ENCODE measurements at regions of chr17 and their contacts with region 1.

Region 1: DNA sequence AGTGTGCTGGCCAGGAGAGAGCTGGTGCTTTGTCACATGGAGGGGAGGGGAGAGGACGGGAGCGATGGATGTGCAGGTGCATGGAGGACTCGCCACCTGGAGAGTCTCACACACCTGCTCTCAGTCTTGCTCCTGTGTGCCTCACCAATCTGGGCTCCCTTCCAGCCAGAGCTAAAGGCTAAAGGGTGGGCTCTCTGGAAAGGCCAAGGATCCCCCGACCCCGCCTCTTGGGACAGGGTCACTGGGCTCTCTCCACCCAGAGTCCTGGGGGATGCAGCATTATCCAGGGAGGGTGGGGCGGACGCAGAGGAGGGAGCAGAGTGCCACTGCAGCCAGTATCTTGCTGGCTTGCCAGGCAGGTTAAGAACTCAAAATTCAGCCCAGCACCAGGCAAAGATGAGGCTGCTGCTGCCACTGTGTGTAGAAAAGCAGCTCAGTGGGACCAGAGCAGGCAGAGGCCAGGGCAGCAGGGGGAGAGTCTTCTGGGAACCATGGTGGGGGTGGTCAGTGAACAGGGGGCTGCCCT is 5.4 kb upstream of the STAT5B start:
- DNase-seq: peak; percentile 58 to 89 (median 88)
- ATAC-seq: peak; percentile 62
- H3K4me3 ChIP-seq: no peak overlapping the region
- H3K27ac ChIP-seq: peak overlapping the region; percentile 23 to 58 (median 49)
- H3K4me1 ChIP-seq: peaks cover 16% of the 10 kb centered on the region
- H3K27me3 ChIP-seq: no peaks in the 10 kb centered on the region
- CTCF ChIP-seq: no peak
- POLR2A ChIP-seq: peak in 1 of 3 donors; percentile 46

Region 2: DNA sequence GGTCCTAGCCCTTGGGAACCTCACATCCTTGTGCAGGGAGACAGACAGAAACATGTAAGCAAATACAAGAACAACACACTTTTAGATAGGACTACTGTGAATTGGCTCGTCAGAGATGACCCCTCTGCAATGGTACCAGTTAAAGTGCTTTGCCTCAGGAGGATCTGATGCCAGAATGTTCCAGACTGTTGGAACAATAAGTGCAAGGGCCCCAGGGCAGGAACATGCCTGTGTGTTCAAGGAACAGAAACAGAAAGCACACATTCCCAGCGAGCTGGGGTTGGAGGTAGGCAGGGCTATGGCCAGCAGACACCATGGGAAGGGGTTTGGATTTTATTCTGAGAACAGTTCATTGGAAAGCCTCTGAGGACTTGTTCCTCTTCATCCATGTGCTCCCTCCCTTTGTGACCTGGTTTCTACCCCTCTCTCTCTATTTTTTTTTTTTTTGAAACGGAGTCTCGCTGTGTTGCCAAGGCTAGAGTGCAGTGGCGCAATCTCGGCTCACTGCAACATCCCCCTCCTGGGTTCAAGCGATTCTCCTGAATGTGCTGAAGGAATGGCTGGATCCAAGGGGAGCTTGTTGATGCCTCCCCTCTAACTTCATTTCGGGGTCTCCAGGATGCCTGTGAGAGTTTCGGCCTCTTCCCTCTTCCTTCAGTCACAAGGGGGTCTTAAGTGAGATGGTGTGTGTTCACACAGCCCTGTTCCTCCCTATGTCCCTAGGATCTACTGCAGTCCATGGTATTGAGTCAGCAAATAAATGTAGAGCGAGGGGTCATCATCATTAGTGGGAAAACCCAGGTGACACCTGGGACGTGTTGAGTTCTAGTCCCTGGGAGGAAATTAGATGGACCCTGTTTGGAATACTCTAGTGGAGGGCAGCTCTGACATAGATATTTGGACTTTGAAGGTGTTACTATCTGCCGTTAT is 13.1 kb after region 1 on chr17:
- intact Hi-C with region 1: loop called (anchors 2 kb)
- DNase-seq: no peak
- ATAC-seq: no peak
- H3K4me3 ChIP-seq: no peak overlapping the region
- H3K27ac ChIP-seq: no peak overlapping the region
- H3K4me1 ChIP-seq: no peaks in the 10 kb centered on the region
- H3K27me3 ChIP-seq: no peaks in the 10 kb centered on the region
- CTCF ChIP-seq: no peak
- POLR2A ChIP-seq: no peak

Measured in body of pancreas (tissue), 4 donors.